Calu3 (cell line): ENCODE measurements at regions of chr4 and their contacts with region 1.

Region 1: GRCh38 chr4:75028196-75028854 is 95.4 kb downstream of the PARM1 start:
- DNase-seq: no peak
- H3K4me3 Mint-ChIP-seq: no peak overlapping the region
- H3K27ac Mint-ChIP-seq: no peak overlapping the region
- H3K4me1 Mint-ChIP-seq: peaks cover 10% of the 10 kb centered on the region
- H3K27me3 Mint-ChIP-seq: no peaks in the 10 kb centered on the region
- CTCF ChIP-seq: no peak

Region 2: DNA sequence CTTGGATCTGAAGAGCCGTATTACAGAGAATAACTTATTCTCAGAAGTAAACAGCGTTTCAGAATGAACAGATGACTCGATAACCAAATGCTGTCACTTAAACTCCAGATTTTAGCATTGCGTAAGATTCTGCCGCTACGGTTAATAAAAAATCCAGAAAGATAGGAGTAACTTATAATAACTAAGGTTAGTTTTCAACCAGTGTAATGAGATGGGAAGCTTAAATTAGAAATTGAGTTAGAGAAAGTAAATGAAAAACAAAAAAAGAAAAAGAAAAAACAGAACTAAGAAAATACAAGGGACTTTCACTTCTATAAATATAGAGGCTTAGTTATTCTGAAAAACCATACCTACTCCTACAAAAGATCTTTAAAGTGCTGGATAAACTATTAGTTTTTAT is 108.5 kb before region 1 on chr4:
- CTCF ChIA-PET with region 1: no interaction called
- intact Hi-C with region 1: no loop called
- DNase-seq: no peak
- H3K4me3 Mint-ChIP-seq: no peak overlapping the region
- H3K27ac Mint-ChIP-seq: no peak overlapping the region
- H3K4me1 Mint-ChIP-seq: no peaks in the 10 kb centered on the region
- H3K27me3 Mint-ChIP-seq: peaks cover 11% of the 10 kb centered on the region
- CTCF ChIP-seq: no peak

Region 3: DNA sequence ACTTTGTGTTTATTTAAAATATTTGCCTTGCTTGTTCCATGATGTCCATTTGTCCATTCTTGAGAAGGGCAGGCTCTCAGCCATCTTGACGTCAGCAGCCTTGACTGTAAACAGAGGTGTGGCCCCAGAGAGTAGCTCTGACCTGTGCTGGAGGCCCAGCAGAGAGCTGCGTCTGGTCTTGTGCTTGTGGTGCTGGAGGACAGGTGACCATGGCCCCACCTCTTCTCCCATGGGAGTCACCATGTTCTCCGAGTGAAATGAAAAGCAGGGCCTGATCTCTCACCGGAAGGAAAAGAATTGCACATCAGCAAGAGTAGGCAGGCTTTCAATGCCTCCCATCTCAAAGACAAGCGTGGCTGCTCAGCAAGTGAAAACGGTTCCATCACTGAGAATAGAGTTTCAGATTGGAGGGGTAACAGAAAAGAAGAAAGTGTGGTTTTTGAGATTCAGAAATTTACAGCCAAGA is 84.0 kb before region 1 on chr4:
- CTCF ChIA-PET with region 1: no interaction called
- intact Hi-C with region 1: loop called (anchors 10 kb)
- DNase-seq: peak; percentile 32
- H3K4me3 Mint-ChIP-seq: no peak overlapping the region
- H3K27ac Mint-ChIP-seq: peak overlapping the region; percentile 36
- H3K4me1 Mint-ChIP-seq: peaks cover 59% of the 10 kb centered on the region
- H3K27me3 Mint-ChIP-seq: no peaks in the 10 kb centered on the region
- CTCF ChIP-seq: no peak

Region 4: GRCh38 chr4:75069493-75070074 is 41.3 kb after region 1 on chr4:
- CTCF ChIA-PET with region 1: no interaction called
- intact Hi-C with region 1: no loop called
- DNase-seq: no peak
- H3K4me3 Mint-ChIP-seq: no peak overlapping the region
- H3K27ac Mint-ChIP-seq: no peak overlapping the region
- H3K4me1 Mint-ChIP-seq: no peaks in the 10 kb centered on the region
- H3K27me3 Mint-ChIP-seq: no peaks in the 10 kb centered on the region
- CTCF ChIP-seq: no peak